CD4-positive, alpha-beta T cell (primary cell): ENCODE measurements at regions of chr1 and their contacts with region 1.

Region 1: DNA sequence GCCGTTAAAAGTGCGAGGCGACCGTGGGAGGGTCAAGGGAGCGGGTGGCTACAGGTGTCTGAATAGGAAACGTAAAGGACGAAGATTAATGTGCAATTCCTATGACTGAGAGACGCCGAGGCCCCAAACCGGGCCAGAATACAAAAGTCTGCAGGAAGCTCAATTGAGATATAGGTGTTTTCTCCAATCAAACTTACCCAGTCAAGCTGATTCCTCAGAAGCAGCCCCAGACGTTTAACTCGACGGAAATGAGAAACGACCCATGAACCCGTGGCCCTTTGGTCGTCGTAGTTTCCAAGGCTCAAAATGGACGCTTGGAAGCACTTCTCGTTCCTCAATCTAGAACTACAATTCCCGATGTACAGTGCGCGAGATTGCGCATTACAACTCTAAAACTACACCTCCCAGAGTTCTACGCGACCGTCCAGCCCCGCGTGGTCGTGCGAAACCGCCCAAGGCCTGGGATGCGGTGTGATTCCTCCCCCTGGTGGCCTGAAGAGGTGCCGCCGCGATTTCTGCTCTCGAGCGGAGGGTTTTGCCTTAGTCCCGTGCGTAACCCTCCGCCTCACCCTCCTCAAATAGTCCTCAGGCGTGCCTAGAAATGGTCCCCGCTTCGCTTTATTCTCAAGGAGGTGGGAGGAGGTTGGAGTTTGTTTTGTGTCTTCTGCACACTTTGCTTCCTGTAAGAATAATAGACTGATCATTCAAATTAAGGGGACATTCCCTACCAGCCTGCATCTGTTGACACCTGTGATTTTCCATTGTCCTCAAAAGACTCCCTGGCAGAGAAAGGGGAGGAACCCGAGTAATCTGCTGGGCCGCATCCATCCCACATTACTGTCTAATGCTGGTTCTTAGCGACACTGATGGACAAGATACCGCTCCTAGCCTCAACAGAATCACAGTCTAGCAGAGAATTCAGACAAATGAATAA is at the start of gene PAFAH2:
- DNase-seq: peak; percentile 92 to 99 (median 96)
- ATAC-seq: peak; percentile 95
- H3K4me3 ChIP-seq: peak within 1 kb of the TSS; percentile 71
- H3K4me3 Mint-ChIP-seq: peak within 1 kb of the TSS; percentile 91
- H3K27ac ChIP-seq: peak within 1 kb of the TSS; percentile 87 to 93
- H3K27ac Mint-ChIP-seq: peak within 1 kb of the TSS; percentile 97
- H3K4me1 ChIP-seq: peaks cover 21% of the 10 kb centered on the region
- H3K4me1 Mint-ChIP-seq: peaks cover 39% of the 10 kb centered on the region
- H3K27me3 ChIP-seq: no peaks in the 10 kb centered on the region
- H3K27me3 Mint-ChIP-seq: no peaks in the 10 kb centered on the region
- CTCF ChIP-seq: peak; percentile 90
- total RNA-seq, gene PAFAH2: 7.9 to 8.1 TPM

Region 2: GRCh38 chr1:25810341-25811299 is 187.5 kb before region 1 on chr1:
- CTCF ChIA-PET with region 1: no interaction called
- POLR2A ChIA-PET with region 1: no interaction called
- intact Hi-C with region 1: no loop called
- DNase-seq: peak; percentile 70 to 89 (median 80)
- ATAC-seq: peak; percentile 99
- H3K4me3 ChIP-seq: no peak overlapping the region
- H3K4me3 Mint-ChIP-seq: no peak overlapping the region
- H3K27ac ChIP-seq: no peak overlapping the region
- H3K27ac Mint-ChIP-seq: no peak overlapping the region
- H3K4me1 ChIP-seq: peaks cover 13% of the 10 kb centered on the region
- H3K4me1 Mint-ChIP-seq: peaks cover 5% of the 10 kb centered on the region
- H3K27me3 ChIP-seq: no peaks in the 10 kb centered on the region
- H3K27me3 Mint-ChIP-seq: no peaks in the 10 kb centered on the region
- CTCF ChIP-seq: peak; percentile 96

Region 3: GRCh38 chr1:25837262-25837875 is 160.7 kb before region 1 on chr1:
- CTCF ChIA-PET with region 1: interaction called, 3 read pairs
- POLR2A ChIA-PET with region 1: no interaction called
- intact Hi-C with region 1: loop called in 1 of 2 experiments (anchors 5 kb)
- DNase-seq: peak in 1 of 14 experiments; percentile 8
- ATAC-seq: no peak
- H3K4me3 ChIP-seq: no peak overlapping the region
- H3K4me3 Mint-ChIP-seq: no peak overlapping the region
- H3K27ac ChIP-seq: no peak overlapping the region
- H3K27ac Mint-ChIP-seq: no peak overlapping the region
- H3K4me1 ChIP-seq: peaks cover under 1% of the 10 kb centered on the region
- H3K4me1 Mint-ChIP-seq: peaks cover 2% of the 10 kb centered on the region
- H3K27me3 ChIP-seq: no peaks in the 10 kb centered on the region
- H3K27me3 Mint-ChIP-seq: no peaks in the 10 kb centered on the region
- CTCF ChIP-seq: peak; percentile 42

Region 4: GRCh38 chr1:25905680-25906643 is 92.1 kb before region 1 on chr1 and contains the start of gene STMN1:
- CTCF ChIA-PET with region 1: interaction called, 6 read pairs
- POLR2A ChIA-PET with region 1: interaction called, 63 read pairs
- intact Hi-C with region 1: loop called (anchors 1 kb)
- DNase-seq: peak; percentile 81 to 94 (median 88)
- ATAC-seq: peak; percentile 75
- H3K4me3 ChIP-seq: peak within 1 kb of the TSS; percentile 72
- H3K4me3 Mint-ChIP-seq: peak within 1 kb of the TSS; percentile 98
- H3K27ac ChIP-seq: peak within 1 kb of the TSS; percentile 64 to 65
- H3K27ac Mint-ChIP-seq: peak within 1 kb of the TSS; percentile 97
- H3K4me1 ChIP-seq: peaks cover 22% of the 10 kb centered on the region
- H3K4me1 Mint-ChIP-seq: peaks cover 23% of the 10 kb centered on the region
- H3K27me3 ChIP-seq: no peaks in the 10 kb centered on the region
- H3K27me3 Mint-ChIP-seq: no peaks in the 10 kb centered on the region
- CTCF ChIP-seq: no peak
- total RNA-seq, gene STMN1: 25.2 to 25.6 TPM

Region 5: DNA sequence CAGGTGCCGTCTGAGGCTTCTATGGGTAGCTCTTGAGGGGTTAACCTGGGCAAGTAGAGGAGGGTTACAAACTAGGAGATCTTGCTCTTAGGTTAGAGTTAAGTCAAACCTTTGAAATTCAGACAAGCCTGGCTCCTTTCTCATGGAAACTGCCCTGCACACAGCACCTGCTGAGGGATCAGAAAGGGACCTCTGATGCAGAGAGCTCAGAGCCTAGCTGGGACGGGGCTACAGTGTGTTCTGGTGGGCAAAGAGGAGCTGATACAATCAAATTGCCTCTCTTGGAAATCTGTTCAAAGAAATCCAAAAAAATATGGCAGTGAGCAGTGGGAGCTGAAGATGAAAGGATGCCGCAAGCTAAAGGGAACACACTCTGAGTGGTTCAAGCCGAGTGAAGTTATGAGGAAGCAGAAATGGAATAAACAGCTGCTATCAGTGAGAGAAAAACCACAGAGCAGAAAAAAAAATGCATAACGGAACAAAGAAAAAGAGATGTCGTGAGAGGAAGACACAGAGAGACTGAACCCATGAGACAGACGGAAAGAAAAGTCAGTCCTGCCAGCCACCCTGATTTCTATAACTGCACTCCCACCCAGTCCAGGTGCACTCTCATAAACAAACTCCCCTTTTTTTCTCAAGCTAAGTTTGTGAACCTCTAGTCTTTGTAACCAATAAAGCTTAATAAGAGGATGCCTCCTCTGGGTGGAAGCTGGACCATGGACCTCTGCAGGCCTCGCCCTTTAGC is 26.9 kb before region 1 on chr1:
- CTCF ChIA-PET with region 1: interaction called, 7 read pairs
- POLR2A ChIA-PET with region 1: interaction called, 26 read pairs
- intact Hi-C with region 1: loop called in 1 of 2 experiments (anchors 1 kb)
- DNase-seq: peak in 7 of 14 experiments; percentile 8 to 64 (median 51)
- ATAC-seq: peak; percentile 84
- H3K4me3 ChIP-seq: no peak overlapping the region
- H3K4me3 Mint-ChIP-seq: peak overlapping the region; percentile 28
- H3K27ac ChIP-seq: peak overlapping the region; percentile 5 to 23
- H3K27ac Mint-ChIP-seq: peak overlapping the region; percentile 79
- H3K4me1 ChIP-seq: peaks cover 22% of the 10 kb centered on the region
- H3K4me1 Mint-ChIP-seq: peaks cover 63% of the 10 kb centered on the region
- H3K27me3 ChIP-seq: no peaks in the 10 kb centered on the region
- H3K27me3 Mint-ChIP-seq: no peaks in the 10 kb centered on the region
- CTCF ChIP-seq: no peak

Region 6: GRCh38 chr1:26045722-26046248 is 47.7 kb after region 1 on chr1 and contains the start of gene SLC30A2:
- CTCF ChIA-PET with region 1: no interaction called
- POLR2A ChIA-PET with region 1: no interaction called
- intact Hi-C with region 1: no loop called
- DNase-seq: no peak
- ATAC-seq: no peak
- H3K4me3 ChIP-seq: no peak within 1 kb of the TSS
- H3K4me3 Mint-ChIP-seq: no peak within 1 kb of the TSS
- H3K27ac ChIP-seq: no peak within 1 kb of the TSS
- H3K27ac Mint-ChIP-seq: no peak within 1 kb of the TSS
- H3K4me1 ChIP-seq: peaks cover 2% of the 10 kb centered on the region
- H3K4me1 Mint-ChIP-seq: peaks cover 6% of the 10 kb centered on the region
- H3K27me3 ChIP-seq: peaks cover 50 to 59% of the 10 kb centered on the region in 2 experiments
- H3K27me3 Mint-ChIP-seq: peaks cover 75% of the 10 kb centered on the region
- CTCF ChIP-seq: no peak
- total RNA-seq, gene SLC30A2: not detected